GM12878 (cell line): ENCODE measurements at regions of chr21 and their contacts with region 1.

Region 1: DNA sequence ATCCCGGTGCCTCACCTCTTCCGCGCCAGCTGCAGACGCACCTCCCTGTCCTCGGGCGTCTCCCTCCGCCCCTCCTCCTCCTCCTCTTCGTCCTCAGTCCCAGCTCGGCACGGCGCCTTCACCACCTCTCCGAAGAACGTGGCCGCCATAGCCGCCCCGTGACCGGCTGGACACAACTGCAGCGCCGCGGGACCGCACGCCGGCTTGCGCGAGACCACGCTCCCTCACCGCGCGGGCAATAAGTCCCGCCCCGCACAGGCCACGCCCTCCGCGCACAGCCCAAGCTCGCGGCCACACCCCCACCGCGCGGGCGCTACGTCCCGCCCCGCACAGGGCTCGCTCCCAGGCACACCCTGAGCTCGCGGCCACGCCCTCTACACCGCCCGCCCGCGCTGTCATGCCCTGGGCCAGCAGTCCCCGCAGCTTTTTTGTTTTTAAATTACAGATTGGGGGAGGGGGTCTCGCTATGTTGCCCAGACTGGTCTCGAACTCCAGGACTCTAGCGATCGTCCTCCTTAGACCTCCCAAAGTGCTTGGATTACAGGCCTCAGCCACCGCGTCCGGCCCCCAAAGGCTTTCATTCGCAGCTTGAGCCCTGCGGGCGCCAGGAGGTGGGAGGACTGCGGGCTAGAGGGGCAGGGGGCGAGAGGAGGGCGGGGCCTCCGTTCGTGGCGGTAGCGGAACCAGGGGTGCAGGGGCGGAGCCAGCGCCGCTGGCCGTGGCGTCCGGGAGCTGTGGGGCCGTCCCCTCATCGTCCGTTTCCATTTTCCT is at the start of gene PSMG1:
- DNase-seq: peak; percentile 77
- ATAC-seq: peak; percentile 93
- H3K4me3 ChIP-seq: peak within 1 kb of the TSS; percentile 95
- H3K27ac ChIP-seq: peak within 1 kb of the TSS; percentile 88
- H3K4me1 ChIP-seq: peaks cover 26% of the 10 kb centered on the region
- H3K27me3 ChIP-seq: no peaks in the 10 kb centered on the region
- CTCF ChIP-seq: no peak
- EP300 ChIP-seq: no peak
- POLR2A ChIP-seq: peak; percentile 94
- RAD21 ChIP-seq: no peak
- polyA plus RNA-seq, gene PSMG1: 21.3 to 79.8 TPM

Region 2: DNA sequence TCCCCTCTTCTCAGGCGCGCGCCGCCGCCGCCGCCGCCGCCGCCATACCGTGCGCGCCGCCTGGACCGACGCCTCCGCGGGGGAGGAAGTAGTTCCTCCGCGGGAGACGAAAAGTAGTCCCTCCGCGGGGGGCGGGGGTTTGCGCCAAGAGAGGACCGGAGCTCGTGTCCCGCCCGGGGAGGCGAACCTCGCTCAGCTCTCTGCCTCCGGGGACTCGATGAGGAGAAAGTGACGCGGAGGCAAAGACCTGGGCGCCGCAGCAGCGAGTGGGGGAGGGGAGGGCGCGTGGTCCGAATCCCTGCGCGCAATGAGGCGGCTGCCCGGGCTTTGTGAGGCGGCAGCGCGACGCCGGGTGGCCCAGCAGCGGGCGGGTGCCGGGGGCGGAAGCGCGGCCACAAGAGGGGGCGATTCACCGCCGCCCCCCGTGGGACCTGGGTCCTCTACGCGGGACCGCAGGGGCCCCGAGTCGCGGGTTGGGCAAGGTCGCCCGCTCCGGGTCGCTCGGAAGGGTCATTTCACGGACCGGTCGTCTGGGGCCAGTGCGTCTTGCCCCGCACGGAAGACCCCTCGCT is 130.2 kb after region 1 on chr21 and contains the start of gene BRWD1:
- CTCF ChIA-PET with region 1: no interaction called
- POLR2A ChIA-PET with region 1: interaction called, 3 read pairs
- RAD21 ChIA-PET with region 1: no interaction called
- SMC1A ChIA-PET with region 1: no interaction called
- in situ Hi-C with region 1: no loop called
- intact Hi-C with region 1: loop called (anchors 5 kb)
- DNase-seq: no peak
- ATAC-seq: peak; percentile 77
- H3K4me3 ChIP-seq: peak within 1 kb of the TSS; percentile 85
- H3K27ac ChIP-seq: peak within 1 kb of the TSS; percentile 93
- H3K4me1 ChIP-seq: peaks cover 4% of the 10 kb centered on the region; the same call in 1 of the 2 replicates
- H3K27me3 ChIP-seq: no peaks in the 10 kb centered on the region
- CTCF ChIP-seq: peak; percentile 4 to 29 (median 16); a peak in 3 of 6 replicates
- EP300 ChIP-seq: 0 out of 4 replicates have a peak, but pooled peaks of 1 of the 2 experiments have one; percentile 4
- POLR2A ChIP-seq: peak; percentile 92
- RAD21 ChIP-seq: no peak
- polyA plus RNA-seq, gene BRWD1: 3.1 to 3.4 TPM

Region 3: DNA sequence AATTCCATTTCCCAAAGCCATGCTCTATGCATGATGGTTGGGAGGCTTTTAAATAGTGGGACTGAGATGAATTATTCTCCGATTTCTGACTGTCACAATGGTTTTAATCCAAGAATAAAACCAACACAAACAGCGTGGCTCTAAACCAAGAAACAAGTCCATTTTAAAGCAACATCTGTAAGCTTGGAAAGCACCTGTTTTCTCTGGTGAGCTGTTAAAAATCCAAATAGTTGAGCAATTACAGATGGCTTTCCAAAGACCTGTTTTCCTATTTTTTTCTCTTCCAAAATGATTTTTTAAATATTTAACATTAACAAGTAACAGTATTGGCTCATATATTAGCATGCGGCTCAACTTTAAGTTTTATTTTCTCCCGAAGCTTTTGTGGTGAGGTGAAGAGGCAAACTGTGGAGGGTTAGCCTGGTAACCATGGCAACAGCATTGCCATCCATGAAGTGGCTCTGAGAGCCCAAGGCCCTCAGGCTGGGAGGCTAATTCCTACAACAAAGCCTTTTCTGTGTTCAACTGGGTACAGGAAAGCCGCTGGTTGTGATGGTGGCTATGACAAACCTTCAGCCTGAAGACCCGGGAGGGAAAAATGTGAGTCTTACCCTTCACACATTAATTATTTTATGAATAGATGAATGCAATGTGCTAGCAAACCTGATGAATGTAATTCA is 372.6 kb after region 1 on chr21:
- CTCF ChIA-PET with region 1: no interaction called
- POLR2A ChIA-PET with region 1: no interaction called
- RAD21 ChIA-PET with region 1: no interaction called
- SMC1A ChIA-PET with region 1: no interaction called
- in situ Hi-C with region 1: no loop called
- intact Hi-C with region 1: no loop called
- DNase-seq: no peak
- ATAC-seq: no peak
- H3K4me3 ChIP-seq: no peak overlapping the region
- H3K27ac ChIP-seq: no peak overlapping the region
- H3K4me1 ChIP-seq: no peaks in the 10 kb centered on the region
- H3K27me3 ChIP-seq: no peaks in the 10 kb centered on the region
- CTCF ChIP-seq: no peak
- EP300 ChIP-seq: no peak
- POLR2A ChIP-seq: no peak
- RAD21 ChIP-seq: no peak